ENCODE measurements at regions of chr19 and their contacts with region 1.

Region 1: GRCh38 chr19:41795031-41795461 is 1.3 kb upstream of the CEACAM3 start:
- DNase-seq: peak; percentile 36
- H3K4me3 ChIP-seq: no peak overlapping the region
- H3K27ac ChIP-seq: no peak overlapping the region
- H3K4me1 ChIP-seq: no peaks in the 10 kb centered on the region
- H3K27me3 ChIP-seq: peaks cover 0 to 4% of the 10 kb centered on the region in 2 experiments
- CTCF ChIP-seq: peak; percentile 69 to 75
- POLR2A ChIP-seq: no peak

Region 2: DNA sequence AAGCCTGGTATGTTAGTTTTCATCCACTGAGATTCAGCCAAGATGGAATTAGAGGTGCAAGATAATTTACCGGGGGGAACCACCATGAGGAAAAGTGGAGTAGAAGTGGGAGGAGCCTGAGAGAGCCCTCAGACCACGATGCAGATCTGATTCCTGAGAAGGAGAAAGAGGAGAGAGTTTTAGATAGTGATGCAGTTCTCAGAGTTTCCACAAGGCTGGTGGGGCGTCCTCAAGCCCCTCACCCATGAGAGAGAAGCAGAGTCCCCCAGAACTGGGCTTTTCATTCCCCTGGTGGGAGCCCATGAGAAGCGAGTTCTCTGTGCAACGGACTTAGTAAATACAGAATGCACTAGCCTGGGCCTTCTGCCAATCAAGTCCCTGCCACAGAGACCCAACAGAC is 68.6 kb before region 1 on chr19:
- CTCF ChIA-PET with region 1: no interaction called
- POLR2A ChIA-PET with region 1: no interaction called
- dilution Hi-C with region 1: no loop called
- intact Hi-C with region 1: no loop called
- DNase-seq: no peak
- H3K4me3 ChIP-seq: no peak overlapping the region
- H3K27ac ChIP-seq: no peak overlapping the region
- H3K4me1 ChIP-seq: no peaks in the 10 kb centered on the region
- H3K27me3 ChIP-seq: no peaks in the 10 kb centered on the region
- CTCF ChIP-seq: no peak
- POLR2A ChIP-seq: no peak

Region 3: DNA sequence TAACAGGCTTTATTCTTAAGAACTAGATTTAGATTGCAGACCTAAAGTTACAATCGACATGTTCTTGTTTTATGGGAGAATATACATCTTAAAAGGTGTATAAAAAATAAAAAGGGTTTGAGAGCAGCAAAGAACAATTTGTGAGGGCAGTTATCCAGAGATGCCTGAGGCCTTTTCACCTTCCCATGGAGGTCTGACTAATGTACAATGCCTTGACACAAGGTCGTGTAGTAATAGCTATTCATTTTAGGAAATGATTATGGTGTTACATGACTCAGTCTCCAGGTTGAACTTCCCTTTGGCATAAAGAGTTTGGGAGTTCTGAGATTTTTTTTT is 19.7 kb before region 1 on chr19:
- CTCF ChIA-PET with region 1: interaction called, 87 read pairs
- POLR2A ChIA-PET with region 1: no interaction called
- dilution Hi-C with region 1: no loop called
- intact Hi-C with region 1: no loop called
- DNase-seq: no peak
- H3K4me3 ChIP-seq: no peak overlapping the region
- H3K27ac ChIP-seq: no peak overlapping the region
- H3K4me1 ChIP-seq: no peaks in the 10 kb centered on the region
- H3K27me3 ChIP-seq: peaks cover 2 to 4% of the 10 kb centered on the region in 2 experiments
- CTCF ChIP-seq: no peak
- POLR2A ChIP-seq: no peak

Region 4: DNA sequence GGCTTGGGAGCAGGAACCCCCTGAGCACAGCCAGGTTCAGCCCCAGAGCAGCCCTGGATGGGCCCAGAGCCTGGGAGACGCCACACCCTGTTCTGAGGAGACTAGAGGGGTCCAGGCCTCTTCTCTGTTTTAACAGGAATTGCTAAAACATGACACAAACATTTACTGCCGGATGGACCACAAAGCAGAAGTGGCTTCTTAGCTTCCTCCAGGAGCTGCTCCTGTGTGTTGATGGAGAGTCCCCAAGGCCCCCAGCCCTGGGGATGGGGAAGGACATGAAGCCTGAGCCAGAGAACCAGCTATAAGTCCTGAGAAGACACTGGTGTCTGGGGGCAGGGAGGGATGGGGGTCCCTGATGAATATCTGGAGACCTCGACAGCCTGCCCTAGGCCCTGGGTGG is 16.0 kb after region 1 on chr19:
- CTCF ChIA-PET with region 1: interaction called, 17 read pairs
- POLR2A ChIA-PET with region 1: no interaction called
- dilution Hi-C with region 1: no loop called
- intact Hi-C with region 1: no loop called
- DNase-seq: no peak
- H3K4me3 ChIP-seq: no peak overlapping the region
- H3K27ac ChIP-seq: no peak overlapping the region
- H3K4me1 ChIP-seq: no peaks in the 10 kb centered on the region
- H3K27me3 ChIP-seq: no peaks in the 10 kb centered on the region
- CTCF ChIP-seq: no peak
- POLR2A ChIP-seq: no peak

Region 5: DNA sequence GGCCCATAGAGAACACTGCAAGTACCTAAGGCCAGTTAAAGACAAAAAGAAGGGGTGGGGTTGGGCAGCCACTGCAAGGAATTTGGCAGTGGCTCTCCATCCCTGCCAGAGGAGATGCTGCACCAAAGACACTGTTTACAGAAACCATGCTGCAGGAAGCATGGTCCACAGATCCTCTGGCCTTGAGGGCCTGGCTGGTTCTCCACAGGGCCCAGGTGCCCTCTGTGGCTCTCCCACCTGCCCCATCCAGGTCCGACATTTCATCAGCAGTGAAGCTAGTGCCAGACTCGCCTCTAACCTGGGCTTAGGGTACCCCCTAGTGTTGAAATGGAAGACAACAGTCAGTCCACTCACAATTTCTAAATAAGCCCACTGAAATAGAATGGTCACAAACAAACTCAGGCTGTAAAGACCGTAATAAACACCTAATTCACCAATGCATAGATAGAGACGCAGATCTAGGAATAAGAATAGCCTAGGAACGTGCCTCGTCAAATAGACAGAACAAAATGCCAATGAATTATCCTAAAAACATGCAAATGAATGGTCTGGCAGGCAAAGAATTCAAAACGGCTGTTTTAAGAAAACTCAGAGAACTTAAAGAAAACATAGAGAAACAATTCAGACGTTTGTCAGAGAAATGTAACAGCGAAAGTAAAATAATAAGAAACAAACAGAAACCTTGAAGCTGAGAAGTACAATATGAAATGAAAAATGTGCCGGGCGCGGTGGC is 26.1 kb after region 1 on chr19:
- CTCF ChIA-PET with region 1: interaction called, 160 read pairs
- POLR2A ChIA-PET with region 1: no interaction called
- dilution Hi-C with region 1: no loop called
- intact Hi-C with region 1: loop called (anchors 1 kb)
- DNase-seq: peak; percentile 53
- H3K4me3 ChIP-seq: no peak overlapping the region
- H3K27ac ChIP-seq: no peak overlapping the region
- H3K4me1 ChIP-seq: no peaks in the 10 kb centered on the region
- H3K27me3 ChIP-seq: no peaks in the 10 kb centered on the region
- CTCF ChIP-seq: peak; percentile 37 to 64
- POLR2A ChIP-seq: no peak

Region 6: DNA sequence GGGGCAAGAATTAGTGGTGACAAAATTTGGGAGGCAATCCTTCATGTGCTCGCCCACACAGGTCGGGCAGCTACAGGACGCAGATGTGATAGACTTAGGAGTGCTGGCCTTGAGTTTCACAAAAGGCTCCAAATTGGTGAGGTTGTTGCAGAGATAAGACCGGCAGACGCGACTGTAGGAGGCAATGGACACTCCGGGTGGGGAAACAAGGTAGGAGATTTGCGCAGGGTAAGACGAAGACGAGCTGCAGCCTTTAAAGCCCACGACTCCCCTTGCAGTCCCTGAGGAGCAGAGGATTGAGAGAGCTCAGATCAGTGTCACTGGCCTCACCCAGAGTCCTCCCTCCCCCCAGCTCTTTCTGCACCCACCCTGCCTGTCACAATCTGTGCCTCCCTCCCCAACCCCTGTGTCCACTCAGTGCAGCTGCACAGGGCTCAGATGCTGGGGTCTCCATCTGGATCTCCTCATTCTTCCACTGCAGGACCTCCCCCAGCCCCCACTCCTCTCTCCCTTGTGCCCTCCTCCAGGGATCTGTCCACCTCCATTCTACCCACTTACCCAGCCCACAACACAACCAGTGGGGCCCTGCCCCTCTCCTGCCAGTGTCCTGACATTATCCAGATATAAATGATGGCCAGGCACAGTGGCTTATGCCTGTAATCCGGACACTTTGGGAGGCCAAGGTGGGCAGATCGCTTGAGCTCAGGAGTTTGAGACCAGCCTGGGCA is 43.1 kb after region 1 on chr19:
- CTCF ChIA-PET with region 1: interaction called, 9 read pairs
- POLR2A ChIA-PET with region 1: no interaction called
- dilution Hi-C with region 1: no loop called
- intact Hi-C with region 1: loop called (anchors 5 kb)
- DNase-seq: no peak
- H3K4me3 ChIP-seq: no peak overlapping the region
- H3K27ac ChIP-seq: no peak overlapping the region
- H3K4me1 ChIP-seq: no peaks in the 10 kb centered on the region
- H3K27me3 ChIP-seq: peaks cover 0 to 2% of the 10 kb centered on the region in 2 experiments
- CTCF ChIP-seq: no peak
- POLR2A ChIP-seq: no peak

Region 7: GRCh38 chr19:41951686-41952172 is 156.7 kb after region 1 on chr19:
- CTCF ChIA-PET with region 1: interaction called, 11 read pairs
- POLR2A ChIA-PET with region 1: no interaction called
- dilution Hi-C with region 1: no loop called
- intact Hi-C with region 1: loop called (anchors 1 kb)
- DNase-seq: peak; percentile 56
- H3K4me3 ChIP-seq: no peak overlapping the region
- H3K27ac ChIP-seq: no peak overlapping the region
- H3K4me1 ChIP-seq: no peaks in the 10 kb centered on the region
- H3K27me3 ChIP-seq: no peaks in the 10 kb centered on the region
- CTCF ChIP-seq: peak; percentile 92 to 99
- POLR2A ChIP-seq: no peak

Region 8: DNA sequence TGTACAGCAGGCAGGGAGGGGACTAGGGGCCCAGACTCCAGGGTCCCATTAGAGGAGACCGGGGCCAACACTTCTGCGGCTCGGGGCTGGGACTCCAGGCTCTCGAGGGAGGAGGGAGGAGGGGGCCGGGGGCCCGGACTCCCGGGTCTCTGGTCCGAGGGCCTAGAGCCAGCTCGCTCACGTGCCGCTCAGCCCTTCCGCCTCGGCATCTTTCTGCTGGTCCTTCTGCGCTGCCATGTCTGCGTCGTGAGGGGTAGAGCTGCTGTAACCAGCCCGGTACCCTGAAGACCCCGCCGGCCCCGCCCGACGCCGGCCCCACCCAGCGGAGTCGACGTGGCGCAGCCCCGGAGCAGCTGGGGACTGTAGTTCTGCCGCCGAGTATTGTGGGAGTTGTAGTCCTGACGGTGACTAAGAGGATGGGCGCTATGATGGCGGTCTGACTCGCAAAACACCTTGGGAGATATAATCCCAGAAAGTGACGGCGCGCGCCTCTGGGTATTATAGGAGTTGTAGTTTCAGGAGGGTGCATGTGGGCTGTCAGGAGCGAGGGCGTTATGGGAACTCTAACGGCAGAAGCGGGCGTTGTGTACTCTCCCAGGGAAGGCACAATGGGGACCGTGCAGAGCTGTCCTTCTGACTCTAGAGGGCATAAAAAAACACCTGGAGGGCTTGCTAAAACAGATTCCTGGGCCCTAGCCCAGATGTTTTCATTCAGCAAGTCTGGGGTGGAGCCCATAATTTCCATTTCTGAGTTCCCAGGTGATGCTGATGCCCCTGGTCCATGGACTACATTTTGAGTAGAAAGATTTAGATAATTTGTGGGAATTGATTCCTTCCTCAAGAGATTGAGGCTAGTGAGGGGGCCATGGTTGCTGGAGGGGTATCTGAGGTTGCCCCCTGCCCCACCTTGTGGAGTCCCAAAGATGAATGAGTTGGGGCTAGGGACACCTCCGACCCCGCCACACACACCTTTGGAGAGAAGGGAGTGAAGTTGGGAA is 164.3 kb after region 1 on chr19 and contains the start of gene RABAC1:
- CTCF ChIA-PET with region 1: interaction called, 13 read pairs
- POLR2A ChIA-PET with region 1: no interaction called
- dilution Hi-C with region 1: no loop called
- intact Hi-C with region 1: no loop called
- DNase-seq: peak; percentile 91
- H3K4me3 ChIP-seq: peak within 1 kb of the TSS; percentile 52 to 90 (median 68)
- H3K27ac ChIP-seq: peak within 1 kb of the TSS; percentile 87
- H3K4me1 ChIP-seq: peaks cover 12% of the 10 kb centered on the region
- H3K27me3 ChIP-seq: no peaks in the 10 kb centered on the region
- CTCF ChIP-seq: peak in 1 of 2 donors; percentile 33
- POLR2A ChIP-seq: no peak
- total RNA-seq, gene RABAC1: 178 and 181 TPM in 2 replicates